CD8-positive, alpha-beta T cell (primary cell): ENCODE measurements at regions of chr5 and their contacts with region 1.

Region 1: DNA sequence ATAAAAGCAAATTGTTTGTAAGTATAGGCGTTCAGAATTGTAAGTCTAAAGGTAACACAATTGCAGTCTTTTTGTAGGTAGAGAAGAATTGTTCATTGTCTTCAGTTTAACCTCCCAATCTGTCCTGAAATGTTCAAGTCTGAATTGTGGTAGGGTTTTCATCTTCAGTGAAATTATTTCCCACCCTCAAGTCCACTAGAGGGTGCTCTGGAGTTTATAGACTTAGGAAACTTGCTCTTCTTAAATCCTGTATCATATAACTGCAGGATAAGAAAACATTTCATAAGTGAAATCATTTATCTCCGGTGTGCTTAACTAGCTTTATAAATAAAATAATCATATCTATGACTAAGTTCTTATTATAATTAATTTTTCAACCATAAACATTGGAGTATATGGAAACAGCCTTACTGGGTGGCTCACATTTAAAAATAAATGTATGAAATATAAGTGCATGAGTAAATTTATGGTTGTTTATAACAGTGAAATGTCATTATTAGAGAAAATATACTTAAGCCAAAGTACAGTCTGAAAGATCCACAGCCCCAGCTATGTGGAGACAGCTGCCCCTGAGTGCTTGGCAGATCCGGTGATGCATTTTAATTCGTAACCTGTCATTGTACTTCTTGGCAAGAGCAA is 182.4 kb upstream of the OTULINL start:
- DNase-seq: peak in 3 of 9 experiments; percentile 37 to 72 (median 58)
- ATAC-seq: peak; percentile 65
- H3K4me3 ChIP-seq: no peak overlapping the region
- H3K4me3 Mint-ChIP-seq: no peak overlapping the region
- H3K27ac ChIP-seq: no peak overlapping the region
- H3K27ac Mint-ChIP-seq: no peak overlapping the region
- H3K4me1 ChIP-seq: no peaks in the 10 kb centered on the region
- H3K4me1 Mint-ChIP-seq: peaks cover 13% of the 10 kb centered on the region
- H3K27me3 ChIP-seq: no peaks in the 10 kb centered on the region
- H3K27me3 Mint-ChIP-seq: no peaks in the 10 kb centered on the region
- CTCF ChIP-seq: peak; percentile 71

Region 2: DNA sequence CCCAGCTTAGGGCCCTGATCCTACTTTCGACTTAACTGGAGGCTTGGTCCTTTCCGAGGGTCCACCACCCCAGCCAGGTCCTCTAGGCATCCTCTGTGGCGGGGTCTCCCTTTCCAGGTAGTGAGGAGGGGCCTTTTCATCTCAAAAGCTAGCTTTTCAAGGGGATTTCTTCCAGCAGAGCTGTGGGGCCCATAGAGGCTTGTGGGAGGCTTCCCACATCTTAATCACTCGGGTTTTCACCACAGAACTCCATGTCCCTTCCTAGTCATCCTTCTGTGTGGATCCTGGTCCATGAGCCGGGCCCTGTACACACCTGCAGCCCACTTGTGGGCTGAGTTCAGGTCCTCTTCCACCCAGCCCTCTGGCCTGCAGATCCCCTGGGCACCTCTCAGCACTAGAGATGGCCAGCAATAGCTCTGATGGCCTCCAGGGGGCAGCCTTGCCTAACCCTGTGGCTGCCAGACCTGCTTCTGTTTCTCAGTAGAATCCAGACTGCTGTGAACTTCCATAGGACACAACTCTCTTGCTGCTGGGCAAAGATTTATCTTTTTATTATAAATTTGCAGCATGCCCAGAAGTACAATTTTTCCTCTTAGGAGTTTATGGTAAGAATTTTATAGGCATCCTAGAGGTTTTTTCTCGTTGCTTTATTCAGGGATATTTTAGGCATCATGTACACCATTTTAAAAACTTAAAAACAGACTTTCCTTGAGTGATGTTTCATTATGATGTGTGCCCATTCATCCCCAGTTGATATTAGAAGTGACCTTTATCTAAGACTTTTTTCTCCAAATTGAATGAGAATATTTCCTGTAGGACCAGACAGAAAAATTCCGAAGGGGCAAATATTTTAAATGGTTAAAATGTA is 47.1 kb before region 1 on chr5:
- CTCF ChIA-PET with region 1: interaction called, 9 read pairs
- POLR2A ChIA-PET with region 1: no interaction called
- intact Hi-C with region 1: loop called in 1 of 2 experiments (anchors 2 kb)
- DNase-seq: peak; percentile 26 to 76 (median 59)
- ATAC-seq: peak; percentile 95
- H3K4me3 ChIP-seq: no peak overlapping the region
- H3K4me3 Mint-ChIP-seq: no peak overlapping the region
- H3K27ac ChIP-seq: no peak overlapping the region
- H3K27ac Mint-ChIP-seq: no peak overlapping the region
- H3K4me1 ChIP-seq: no peaks in the 10 kb centered on the region
- H3K4me1 Mint-ChIP-seq: no peaks in the 10 kb centered on the region
- H3K27me3 ChIP-seq: no peaks in the 10 kb centered on the region
- H3K27me3 Mint-ChIP-seq: peaks cover 3% of the 10 kb centered on the region
- CTCF ChIP-seq: peak; percentile 87

Region 3: DNA sequence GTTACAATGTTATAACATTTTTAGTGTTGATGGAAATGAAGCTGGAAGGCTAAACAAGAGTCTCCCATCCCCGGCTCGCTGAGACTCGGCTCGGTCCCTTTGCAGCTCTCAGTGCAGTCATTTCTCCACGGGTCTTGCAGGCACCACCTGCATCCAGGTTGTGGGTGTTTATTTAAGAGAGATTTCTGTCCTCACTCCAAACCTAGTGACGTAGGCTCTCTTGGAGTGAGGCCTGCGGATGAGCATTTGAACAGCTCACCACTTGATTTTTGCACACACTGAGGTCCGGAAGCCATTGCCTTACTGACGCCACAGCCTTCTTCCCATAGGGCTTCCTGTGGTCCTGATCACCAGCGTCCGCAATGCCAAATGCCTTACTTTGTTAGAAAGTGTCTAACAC is 15.2 kb before region 1 on chr5:
- CTCF ChIA-PET with region 1: interaction called, 11 read pairs
- POLR2A ChIA-PET with region 1: interaction called, 3 read pairs
- intact Hi-C with region 1: no loop called
- DNase-seq: no peak
- ATAC-seq: no peak
- H3K4me3 ChIP-seq: no peak overlapping the region
- H3K4me3 Mint-ChIP-seq: no peak overlapping the region
- H3K27ac ChIP-seq: no peak overlapping the region
- H3K27ac Mint-ChIP-seq: no peak overlapping the region
- H3K4me1 ChIP-seq: no peaks in the 10 kb centered on the region
- H3K4me1 Mint-ChIP-seq: peaks cover 8% of the 10 kb centered on the region
- H3K27me3 ChIP-seq: no peaks in the 10 kb centered on the region
- H3K27me3 Mint-ChIP-seq: peaks cover 7% of the 10 kb centered on the region
- CTCF ChIP-seq: no peak

Region 4: GRCh38 chr5:14458414-14458813 is 59.2 kb after region 1 on chr5:
- CTCF ChIA-PET with region 1: no interaction called
- POLR2A ChIA-PET with region 1: no interaction called
- intact Hi-C with region 1: no loop called
- DNase-seq: no peak
- ATAC-seq: no peak
- H3K4me3 ChIP-seq: no peak overlapping the region
- H3K4me3 Mint-ChIP-seq: no peak overlapping the region
- H3K27ac ChIP-seq: no peak overlapping the region
- H3K27ac Mint-ChIP-seq: no peak overlapping the region
- H3K4me1 ChIP-seq: no peaks in the 10 kb centered on the region
- H3K4me1 Mint-ChIP-seq: no peaks in the 10 kb centered on the region
- H3K27me3 ChIP-seq: no peaks in the 10 kb centered on the region
- H3K27me3 Mint-ChIP-seq: no peaks in the 10 kb centered on the region
- CTCF ChIP-seq: no peak

Region 5: DNA sequence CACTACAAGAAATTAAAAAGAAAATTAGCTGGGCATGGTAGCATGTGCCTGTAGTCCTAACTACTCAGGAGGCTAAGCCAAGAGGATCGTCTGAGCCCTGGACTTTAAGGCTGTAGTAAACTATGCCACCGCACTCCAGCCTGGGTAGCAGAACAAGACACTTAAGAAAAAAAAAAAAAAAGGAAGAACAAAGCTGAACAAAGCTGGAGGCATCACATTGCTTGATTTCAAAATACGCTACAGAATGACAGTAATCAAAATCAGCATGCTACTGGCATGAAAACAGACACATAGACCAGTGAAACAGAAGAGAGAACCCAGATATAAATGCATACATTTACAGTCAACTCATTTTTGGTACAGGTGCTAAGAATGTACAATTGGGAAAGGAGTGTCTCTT is 250.9 kb after region 1 on chr5:
- CTCF ChIA-PET with region 1: interaction called, 141 read pairs
- POLR2A ChIA-PET with region 1: interaction called, 3 read pairs
- intact Hi-C with region 1: loop called (anchors 1 kb)
- DNase-seq: no peak
- ATAC-seq: no peak
- H3K4me3 ChIP-seq: no peak overlapping the region
- H3K4me3 Mint-ChIP-seq: no peak overlapping the region
- H3K27ac ChIP-seq: no peak overlapping the region
- H3K27ac Mint-ChIP-seq: no peak overlapping the region
- H3K4me1 ChIP-seq: peaks cover 4% of the 10 kb centered on the region
- H3K4me1 Mint-ChIP-seq: peaks cover under 1% of the 10 kb centered on the region
- H3K27me3 ChIP-seq: no peaks in the 10 kb centered on the region
- H3K27me3 Mint-ChIP-seq: peaks cover 7% of the 10 kb centered on the region
- CTCF ChIP-seq: no peak

Region 6: GRCh38 chr5:14655146-14655741 is 256.1 kb after region 1 on chr5:
- CTCF ChIA-PET with region 1: interaction called, 141 read pairs
- POLR2A ChIA-PET with region 1: no interaction called
- intact Hi-C with region 1: no loop called
- DNase-seq: no peak
- ATAC-seq: peak; percentile 26
- H3K4me3 ChIP-seq: no peak overlapping the region
- H3K4me3 Mint-ChIP-seq: no peak overlapping the region
- H3K27ac ChIP-seq: no peak overlapping the region
- H3K27ac Mint-ChIP-seq: no peak overlapping the region
- H3K4me1 ChIP-seq: no peaks in the 10 kb centered on the region
- H3K4me1 Mint-ChIP-seq: peaks cover 14% of the 10 kb centered on the region
- H3K27me3 ChIP-seq: no peaks in the 10 kb centered on the region
- H3K27me3 Mint-ChIP-seq: no peaks in the 10 kb centered on the region
- CTCF ChIP-seq: no peak